WTC11 (cell line): ENCODE measurements at regions of chr1 and their contacts with region 1.

Region 1: DNA sequence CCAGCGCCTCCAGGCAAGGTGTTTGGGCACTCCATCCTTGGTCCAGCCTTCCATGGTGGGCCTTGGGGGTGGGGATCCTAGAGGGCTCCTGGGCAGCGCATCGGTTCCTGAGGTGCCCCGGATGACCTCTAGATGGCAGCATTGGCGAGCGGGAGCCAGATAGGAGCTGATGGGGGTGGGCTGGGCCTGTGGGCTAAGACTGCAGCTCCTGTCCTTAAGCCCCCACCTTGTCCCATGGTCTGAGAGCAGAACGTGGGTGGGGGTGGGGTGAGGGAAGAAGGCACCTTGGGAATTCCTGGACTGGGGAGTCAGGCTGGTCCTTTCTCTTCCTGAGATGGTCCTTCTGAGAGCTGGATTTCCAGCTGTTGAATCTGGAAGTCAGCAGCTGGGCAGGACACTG is 93.4 kb upstream of the CSF3R start:
- DNase-seq: peak; percentile 89
- ATAC-seq: peak; percentile 92
- H3K4me3 Mint-ChIP-seq: no peak overlapping the region
- H3K27ac Mint-ChIP-seq: no peak overlapping the region
- H3K4me1 Mint-ChIP-seq: peaks cover 16% of the 10 kb centered on the region
- H3K27me3 Mint-ChIP-seq: no peaks in the 10 kb centered on the region
- CTCF ChIP-seq: peak; percentile 76

Region 2: GRCh38 chr1:36385410-36386257 is 190.5 kb before region 1 on chr1 and contains the start of gene STK40:
- CTCF ChIA-PET with region 1: no interaction called
- POLR2A ChIA-PET with region 1: no interaction called
- DNase-seq: peak; percentile 97
- ATAC-seq: peak; percentile 96
- H3K4me3 Mint-ChIP-seq: peak within 1 kb of the TSS; percentile 94
- H3K27ac Mint-ChIP-seq: peak within 1 kb of the TSS; percentile 99
- H3K4me1 Mint-ChIP-seq: peaks cover 31% of the 10 kb centered on the region
- H3K27me3 Mint-ChIP-seq: no peaks in the 10 kb centered on the region
- CTCF ChIP-seq: no peak
- total RNA-seq, gene STK40: 17.8 to 24.7 TPM (median 20.4 TPM) in 3 replicates

Region 3: DNA sequence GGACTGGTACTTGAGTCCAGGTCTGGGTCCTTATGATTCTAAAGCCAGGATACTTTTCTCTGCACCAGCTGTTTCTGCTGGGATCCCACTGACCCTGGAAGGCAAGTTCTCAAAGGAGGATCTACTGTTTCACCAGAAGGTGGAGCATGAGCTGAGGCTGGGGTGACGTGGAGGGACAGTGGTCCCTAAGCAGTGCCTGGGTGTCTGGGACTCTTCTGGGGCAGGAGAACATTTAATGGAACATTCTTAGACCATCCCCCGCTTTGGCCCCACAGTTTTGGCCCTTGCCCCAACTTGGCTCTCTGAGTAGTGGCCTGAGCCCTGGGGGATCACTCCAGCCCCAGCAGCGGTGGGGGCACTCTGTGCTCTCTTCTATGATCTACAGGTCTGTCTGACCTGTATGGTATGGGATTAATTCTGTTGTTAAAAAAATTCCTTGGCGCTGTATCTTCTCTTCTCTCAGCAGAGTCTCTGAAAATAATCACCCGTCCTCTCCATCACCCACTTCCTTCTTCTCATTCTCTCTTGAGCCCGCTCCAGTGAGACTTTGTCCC is 33.1 kb before region 1 on chr1:
- CTCF ChIA-PET with region 1: interaction called, 10 read pairs
- POLR2A ChIA-PET with region 1: no interaction called
- DNase-seq: peak; percentile 50
- ATAC-seq: peak; percentile 96
- H3K4me3 Mint-ChIP-seq: no peak overlapping the region
- H3K27ac Mint-ChIP-seq: no peak overlapping the region
- H3K4me1 Mint-ChIP-seq: no peaks in the 10 kb centered on the region
- H3K27me3 Mint-ChIP-seq: peaks cover 12% of the 10 kb centered on the region
- CTCF ChIP-seq: no peak

Region 4: DNA sequence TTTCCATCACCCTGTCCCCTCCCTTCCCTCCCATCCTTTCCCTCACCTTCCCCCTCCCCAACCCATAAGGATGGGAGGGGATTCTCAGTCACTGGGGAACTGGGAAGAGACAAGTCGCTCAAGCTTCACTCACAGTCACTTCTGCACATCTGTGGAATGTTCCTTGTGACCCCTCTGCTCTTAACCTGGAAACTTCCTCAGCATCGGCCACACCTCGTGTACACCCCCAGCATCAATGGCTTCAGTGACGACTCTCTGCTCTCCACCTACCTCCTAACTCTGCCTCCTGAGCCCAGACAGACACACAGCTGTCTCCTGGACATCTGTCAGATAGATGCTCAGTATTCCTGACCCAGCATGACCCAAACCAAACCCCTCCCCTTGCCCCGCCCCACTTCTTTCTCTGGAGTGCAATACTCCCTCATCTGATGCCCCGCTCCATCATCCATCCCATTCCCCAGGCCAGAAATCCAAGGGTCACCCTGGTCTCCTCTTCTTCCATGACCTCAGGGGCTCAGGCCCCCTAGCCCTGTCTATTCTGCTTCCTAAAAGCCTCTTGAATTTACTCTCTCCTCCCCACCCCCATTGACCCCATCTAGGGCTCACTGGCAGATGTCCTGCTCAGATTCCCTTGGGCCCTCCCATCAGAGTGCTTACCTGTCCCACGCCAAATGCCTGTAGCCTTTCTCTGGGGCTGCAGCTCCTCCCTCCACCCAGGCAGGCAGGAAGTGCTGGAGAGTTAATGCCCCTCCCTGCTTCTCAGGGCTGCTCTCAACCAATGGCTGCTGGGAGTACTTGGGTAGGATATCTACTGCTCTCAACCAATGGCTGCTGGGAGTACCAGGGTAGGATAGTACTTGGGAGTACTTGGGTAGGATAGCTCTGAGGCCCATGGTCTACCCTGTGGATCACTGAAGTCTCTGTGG is 10.3 kb before region 1 on chr1:
- CTCF ChIA-PET with region 1: interaction called, 14 read pairs
- POLR2A ChIA-PET with region 1: no interaction called
- DNase-seq: no peak
- ATAC-seq: peak; percentile 89
- H3K4me3 Mint-ChIP-seq: no peak overlapping the region
- H3K27ac Mint-ChIP-seq: no peak overlapping the region
- H3K4me1 Mint-ChIP-seq: peaks cover 8% of the 10 kb centered on the region
- H3K27me3 Mint-ChIP-seq: no peaks in the 10 kb centered on the region; the same call in 1 of the 2 replicates
- CTCF ChIP-seq: no peak

Region 5: GRCh38 chr1:36609241-36610027 is 33.3 kb after region 1 on chr1:
- CTCF ChIA-PET with region 1: interaction called, 29 read pairs
- POLR2A ChIA-PET with region 1: no interaction called
- DNase-seq: peak; percentile 86
- ATAC-seq: peak; percentile 96
- H3K4me3 Mint-ChIP-seq: no peak overlapping the region
- H3K27ac Mint-ChIP-seq: no peak overlapping the region
- H3K4me1 Mint-ChIP-seq: no peaks in the 10 kb centered on the region
- H3K27me3 Mint-ChIP-seq: no peaks in the 10 kb centered on the region
- CTCF ChIP-seq: peak; percentile 80

Region 6: GRCh38 chr1:36709869-36710481 is 133.9 kb after region 1 on chr1:
- CTCF ChIA-PET with region 1: interaction called, 15 read pairs
- POLR2A ChIA-PET with region 1: no interaction called
- DNase-seq: no peak
- ATAC-seq: no peak
- H3K4me3 Mint-ChIP-seq: no peak overlapping the region
- H3K27ac Mint-ChIP-seq: no peak overlapping the region
- H3K4me1 Mint-ChIP-seq: peaks cover 21% of the 10 kb centered on the region
- H3K27me3 Mint-ChIP-seq: peaks cover 3% of the 10 kb centered on the region; the same call in 1 of the 2 replicates
- CTCF ChIP-seq: no peak

Region 7: GRCh38 chr1:36816348-36816747 is 240.2 kb after region 1 on chr1:
- CTCF ChIA-PET with region 1: no interaction called
- POLR2A ChIA-PET with region 1: no interaction called
- DNase-seq: no peak
- ATAC-seq: no peak
- H3K4me3 Mint-ChIP-seq: no peak overlapping the region
- H3K27ac Mint-ChIP-seq: no peak overlapping the region
- H3K4me1 Mint-ChIP-seq: peaks cover 4% of the 10 kb centered on the region; the same call in 1 of the 2 replicates
- H3K27me3 Mint-ChIP-seq: no peaks in the 10 kb centered on the region; the same call in 1 of the 2 replicates
- CTCF ChIP-seq: no peak